Naive thymus-derived CD4-positive, alpha-beta T cell (primary cell): ENCODE measurements at regions of chr1 and their contacts with region 1.

Region 1: DNA sequence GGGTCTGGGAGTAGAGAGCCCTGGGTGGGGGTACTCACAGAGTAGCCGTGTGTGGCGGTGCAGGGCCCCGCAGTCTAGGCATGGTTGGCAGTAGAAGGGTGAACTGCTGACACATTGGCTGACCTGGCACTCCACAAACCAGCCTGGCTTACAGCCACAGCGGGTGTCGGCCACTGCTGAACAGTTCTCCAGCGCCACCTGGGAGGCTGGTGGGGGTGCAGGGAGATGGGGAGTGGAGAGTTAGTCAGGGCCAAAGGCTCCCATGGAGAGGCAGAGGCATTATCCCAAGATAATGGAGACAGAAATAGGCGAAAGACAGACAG is 1.5 kb downstream of the TNFRSF25 start:
- DNase-seq: no peak
- ATAC-seq: no peak
- H3K4me3 ChIP-seq: peak overlapping the region; percentile 89
- H3K4me3 Mint-ChIP-seq: peak overlapping the region; percentile 89 to 98 (median 92)
- H3K27ac ChIP-seq: peak overlapping the region; percentile 94
- H3K27ac Mint-ChIP-seq: peak overlapping the region; percentile 90 to 99 (median 95)
- H3K4me1 ChIP-seq: peaks cover 31 to 53% of the 10 kb centered on the region in 2 donors
- H3K4me1 Mint-ChIP-seq: peaks cover 23 to 55% (median 49%) of the 10 kb centered on the region in 7 donors
- H3K27me3 ChIP-seq: no peaks in the 10 kb centered on the region
- H3K27me3 Mint-ChIP-seq: peaks cover 0 to 3% (median 0%) of the 10 kb centered on the region in 5 donors

Region 2: DNA sequence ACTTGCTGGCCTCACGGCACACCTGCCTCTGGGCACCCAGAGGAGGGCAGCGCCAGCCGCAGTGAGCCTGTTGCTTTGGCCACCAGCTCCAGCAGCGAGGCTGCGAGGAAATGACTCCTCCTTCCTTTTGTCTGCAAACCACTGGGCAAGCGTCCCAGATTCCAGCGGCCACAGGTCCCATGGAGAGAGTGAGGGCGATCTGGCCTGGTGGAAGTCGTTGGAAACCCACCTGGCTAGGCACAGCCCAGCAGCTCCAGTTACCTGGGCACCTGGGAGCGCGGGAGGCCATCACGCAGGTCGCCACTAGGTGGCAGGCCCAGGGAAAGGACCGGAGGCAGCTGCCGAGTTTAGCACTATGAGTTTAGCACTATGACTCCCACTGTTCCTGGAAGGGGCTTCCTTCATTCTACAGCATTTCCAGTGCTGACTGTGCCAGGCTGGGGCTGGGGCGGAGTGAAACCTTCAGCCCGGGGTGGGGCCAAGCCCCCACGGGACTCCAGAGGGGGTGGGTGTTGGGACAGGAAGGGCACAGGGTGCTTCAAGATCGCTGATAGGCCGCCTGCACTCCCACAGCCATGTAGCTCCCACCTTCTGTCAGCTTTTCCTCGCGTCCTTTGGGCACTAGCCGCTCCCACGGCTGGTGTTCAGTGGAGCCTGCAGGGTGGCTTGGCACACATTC is 41.0 kb before region 1 on chr1:
- CTCF ChIA-PET with region 1: interaction called, 8 read pairs
- POLR2A ChIA-PET with region 1: interaction called, 5 read pairs
- intact Hi-C with region 1: loop called in 1 of 2 experiments (anchors 2 kb)
- DNase-seq: peak; percentile 45 to 75 (median 66)
- ATAC-seq: peak; percentile 84
- H3K4me3 ChIP-seq: peak overlapping the region; percentile 15
- H3K4me3 Mint-ChIP-seq: peak overlapping the region; percentile 54 to 83 (median 72)
- H3K27ac ChIP-seq: no peak overlapping the region
- H3K27ac Mint-ChIP-seq: no peak overlapping the region
- H3K4me1 ChIP-seq: peaks cover 13 to 31% of the 10 kb centered on the region in 2 donors
- H3K4me1 Mint-ChIP-seq: peaks cover 0 to 14% (median 11%) of the 10 kb centered on the region in 7 donors
- H3K27me3 ChIP-seq: peaks cover 0 to 8% of the 10 kb centered on the region in 2 donors
- H3K27me3 Mint-ChIP-seq: peaks cover 18 to 60% (median 26%) of the 10 kb centered on the region in 5 donors

Region 3: DNA sequence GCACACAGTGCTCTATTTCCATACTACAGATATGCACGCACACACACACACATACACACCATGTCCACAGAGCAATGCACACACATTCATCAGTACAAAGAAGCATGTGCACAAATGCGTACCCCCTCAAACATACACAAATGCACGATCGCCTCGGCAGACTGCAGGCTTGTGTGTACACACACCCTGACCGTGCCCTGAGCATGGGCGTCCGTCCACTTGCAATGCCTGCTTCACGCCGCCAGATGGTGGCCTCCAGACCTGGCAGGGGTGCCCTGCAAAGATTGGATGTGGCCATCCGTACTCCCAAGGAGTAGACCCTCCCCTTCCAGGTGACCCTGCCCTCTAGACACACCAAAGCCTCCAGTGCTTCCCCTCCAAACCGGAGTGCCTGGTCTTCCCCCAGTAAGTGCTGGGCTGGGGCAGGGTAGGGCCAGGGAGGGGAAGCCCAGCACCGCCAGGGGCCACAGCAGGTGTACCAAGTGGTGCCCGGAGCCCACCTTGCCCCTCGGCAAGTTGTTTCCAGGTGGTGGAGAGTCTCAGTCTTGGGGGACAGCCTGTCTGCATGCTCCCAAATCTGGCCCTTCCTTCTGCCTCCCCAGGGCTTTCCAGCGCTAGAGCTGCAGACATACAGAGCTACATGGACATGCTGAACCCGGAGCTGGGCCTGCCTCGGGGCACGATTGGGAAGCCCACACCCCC is 19.3 kb before region 1 on chr1:
- CTCF ChIA-PET with region 1: interaction called, 8 read pairs
- POLR2A ChIA-PET with region 1: interaction called, 165 read pairs
- intact Hi-C with region 1: loop called in 1 of 2 experiments (anchors 1 kb)
- DNase-seq: peak in 3 of 9 donors; percentile 36 to 44 (median 43)
- ATAC-seq: peak; percentile 33
- H3K4me3 ChIP-seq: no peak overlapping the region
- H3K4me3 Mint-ChIP-seq: peak overlapping the region in 3 of 10 donors; percentile 0 to 64 (median 0)
- H3K27ac ChIP-seq: no peak overlapping the region
- H3K27ac Mint-ChIP-seq: peak overlapping the region in 3 of 9 donors; percentile 1 to 53 (median 2)
- H3K4me1 ChIP-seq: peaks cover 4 to 19% of the 10 kb centered on the region in 2 donors
- H3K4me1 Mint-ChIP-seq: peaks cover 13 to 29% (median 17%) of the 10 kb centered on the region in 7 donors
- H3K27me3 ChIP-seq: peaks cover 4 to 18% of the 10 kb centered on the region in 2 donors
- H3K27me3 Mint-ChIP-seq: peaks cover 19 to 61% (median 30%) of the 10 kb centered on the region in 5 donors

Region 4: GRCh38 chr1:6579374-6580118 is 115.1 kb after region 1 on chr1 and contains the start of gene ZBTB48:
- CTCF ChIA-PET with region 1: no interaction called
- POLR2A ChIA-PET with region 1: interaction called, 12 read pairs
- intact Hi-C with region 1: no loop called
- DNase-seq: peak; percentile 92 to 97 (median 94)
- ATAC-seq: peak; percentile 98
- H3K4me3 ChIP-seq: peak within 1 kb of the TSS; percentile 76
- H3K4me3 Mint-ChIP-seq: peak within 1 kb of the TSS; percentile 76 to 97 (median 96)
- H3K27ac ChIP-seq: peak within 1 kb of the TSS; percentile 91
- H3K27ac Mint-ChIP-seq: peak within 1 kb of the TSS; percentile 88 to 98 (median 95)
- H3K4me1 ChIP-seq: peaks cover 25 to 27% of the 10 kb centered on the region in 2 donors
- H3K4me1 Mint-ChIP-seq: peaks cover 27 to 43% (median 35%) of the 10 kb centered on the region in 7 donors
- H3K27me3 ChIP-seq: no peaks in the 10 kb centered on the region
- H3K27me3 Mint-ChIP-seq: no peaks in the 10 kb centered on the region
- total RNA-seq, gene ZBTB48: 39.1 to 70.4 (median 62.2) TPM

Region 5: GRCh38 chr1:6613361-6614018 is 149.0 kb after region 1 on chr1 and contains the start of gene PHF13:
- CTCF ChIA-PET with region 1: no interaction called
- POLR2A ChIA-PET with region 1: interaction called, 5 read pairs
- intact Hi-C with region 1: loop called in 1 of 2 experiments (anchors 1 kb)
- DNase-seq: peak; percentile 97 to 99 (median 98)
- ATAC-seq: peak; percentile 98
- H3K4me3 ChIP-seq: peak within 1 kb of the TSS; percentile 53
- H3K4me3 Mint-ChIP-seq: peak within 1 kb of the TSS; percentile 88 to 97 (median 93)
- H3K27ac ChIP-seq: peak within 1 kb of the TSS; percentile 82
- H3K27ac Mint-ChIP-seq: peak within 1 kb of the TSS; percentile 69 to 95 (median 88)
- H3K4me1 ChIP-seq: peaks cover 0 to 14% of the 10 kb centered on the region in 2 donors
- H3K4me1 Mint-ChIP-seq: peaks cover 16 to 37% (median 25%) of the 10 kb centered on the region in 7 donors
- H3K27me3 ChIP-seq: no peaks in the 10 kb centered on the region
- H3K27me3 Mint-ChIP-seq: peaks cover 0 to 2% (median 0%) of the 10 kb centered on the region in 5 donors
- total RNA-seq, gene PHF13: 7.7 to 14.3 (median 12.2) TPM

Region 6: GRCh38 chr1:6653436-6654290 is 189.2 kb after region 1 on chr1:
- CTCF ChIA-PET with region 1: no interaction called
- POLR2A ChIA-PET with region 1: no interaction called
- intact Hi-C with region 1: no loop called
- DNase-seq: no peak
- ATAC-seq: no peak
- H3K4me3 ChIP-seq: no peak overlapping the region
- H3K4me3 Mint-ChIP-seq: no peak overlapping the region
- H3K27ac ChIP-seq: no peak overlapping the region
- H3K27ac Mint-ChIP-seq: no peak overlapping the region
- H3K4me1 ChIP-seq: no peaks in the 10 kb centered on the region
- H3K4me1 Mint-ChIP-seq: peaks cover 0 to 18% (median 13%) of the 10 kb centered on the region in 7 donors
- H3K27me3 ChIP-seq: no peaks in the 10 kb centered on the region
- H3K27me3 Mint-ChIP-seq: no peaks in the 10 kb centered on the region